Activated CD4-positive, alpha-beta T cell treated with anti-CD3 and anti-CD28 coated beads for 36 hours (primary cell): ENCODE measurements at regions of chr7 and their contacts with region 1.

Region 1: GRCh38 chr7:152025077-152025936 is at the start of gene GALNT11:
- DNase-seq: peak; percentile 93
- ATAC-seq: peak; percentile 96
- H3K4me3 Mint-ChIP-seq: peak within 1 kb of the TSS; percentile 73
- H3K27ac Mint-ChIP-seq: peak within 1 kb of the TSS; percentile 85
- H3K4me1 Mint-ChIP-seq: peaks cover 35% of the 10 kb centered on the region
- H3K27me3 Mint-ChIP-seq: no peaks in the 10 kb centered on the region
- total RNA-seq, gene GALNT11: 22.0 to 24.8 TPM

Region 2: GRCh38 chr7:151341357-151342101 is 683.8 kb before region 1 on chr7 and contains the start of gene NUB1:
- CTCF ChIA-PET with region 1: no interaction called
- POLR2A ChIA-PET with region 1: no interaction called
- intact Hi-C with region 1: loop called in 1 of 2 experiments (anchors 5 kb)
- DNase-seq: peak; percentile 96
- ATAC-seq: peak; percentile 82
- H3K4me3 Mint-ChIP-seq: peak within 1 kb of the TSS; percentile 76
- H3K27ac Mint-ChIP-seq: peak within 1 kb of the TSS; percentile 78
- H3K4me1 Mint-ChIP-seq: peaks cover 46% of the 10 kb centered on the region
- H3K27me3 Mint-ChIP-seq: no peaks in the 10 kb centered on the region
- total RNA-seq, gene NUB1: 51.4 to 70.4 TPM

Region 3: DNA sequence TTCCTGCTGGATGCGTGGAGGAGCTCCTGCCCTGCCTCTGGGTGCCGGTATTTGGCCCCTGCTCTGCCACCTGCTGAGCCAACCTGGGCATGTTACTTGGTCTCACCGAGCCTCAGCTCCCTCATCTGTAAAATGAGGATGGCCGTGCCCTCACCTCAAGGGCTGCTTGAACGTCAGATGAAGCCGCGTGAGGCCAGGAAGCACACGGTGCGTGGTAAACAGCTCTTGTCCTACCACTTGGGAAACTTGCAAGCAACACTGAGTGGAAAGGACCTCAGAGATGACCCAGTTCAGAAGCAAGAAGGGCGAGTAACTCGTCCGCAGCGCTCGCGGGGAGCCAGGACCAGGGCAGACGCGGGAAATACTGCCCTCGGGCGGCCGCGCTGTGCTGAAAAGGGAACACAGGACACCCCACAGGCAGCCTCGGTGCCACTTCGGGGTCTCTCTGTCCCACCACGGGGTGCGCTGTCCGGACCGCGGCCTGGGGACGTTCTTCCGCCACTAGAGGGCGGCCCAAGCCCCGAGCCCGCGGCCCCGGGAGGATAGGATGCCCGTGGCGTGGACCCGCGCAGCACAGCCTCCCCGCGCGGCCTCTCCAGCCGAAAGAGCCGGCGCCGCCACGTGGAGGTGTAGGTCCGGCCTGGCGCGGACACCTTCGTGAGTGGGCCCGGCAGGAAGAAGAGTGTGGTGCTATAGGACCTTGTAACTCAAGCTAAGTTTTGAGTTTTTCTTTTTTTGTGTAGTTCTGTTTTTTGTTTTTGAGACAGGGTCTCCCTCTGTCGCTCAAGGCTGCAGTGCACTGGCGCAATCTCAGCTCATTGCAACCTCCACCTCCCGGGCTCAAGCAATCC is 242.5 kb before region 1 on chr7:
- CTCF ChIA-PET with region 1: interaction called, 3 read pairs
- POLR2A ChIA-PET with region 1: no interaction called
- intact Hi-C with region 1: loop called in 1 of 2 experiments (anchors 1 kb)
- DNase-seq: peak; percentile 84
- ATAC-seq: peak; percentile 91
- H3K4me3 Mint-ChIP-seq: peak overlapping the region; percentile 71
- H3K27ac Mint-ChIP-seq: peak overlapping the region; percentile 86
- H3K4me1 Mint-ChIP-seq: peaks cover 8% of the 10 kb centered on the region
- H3K27me3 Mint-ChIP-seq: no peaks in the 10 kb centered on the region

Region 4: DNA sequence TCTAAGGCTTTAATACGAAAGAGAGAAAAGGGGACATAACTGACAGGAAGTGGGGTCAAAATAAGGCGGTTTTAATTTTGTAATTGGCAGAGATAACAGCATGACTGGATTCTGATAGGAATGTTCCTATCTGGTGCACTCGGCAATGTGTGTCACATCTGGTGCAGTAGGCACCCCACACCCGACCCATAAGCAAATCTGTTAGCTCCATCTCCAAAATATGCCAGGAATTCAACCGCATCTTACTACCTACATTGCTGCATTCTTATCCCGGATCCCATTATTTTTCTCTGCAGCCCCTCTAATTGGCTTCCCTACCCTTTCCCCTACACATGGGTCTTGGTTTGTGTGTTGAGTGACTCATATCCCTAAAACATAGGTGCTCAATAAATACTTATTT is 19.0 kb before region 1 on chr7:
- CTCF ChIA-PET with region 1: no interaction called
- POLR2A ChIA-PET with region 1: no interaction called
- intact Hi-C with region 1: no loop called
- DNase-seq: no peak
- ATAC-seq: no peak
- H3K4me3 Mint-ChIP-seq: no peak overlapping the region
- H3K27ac Mint-ChIP-seq: no peak overlapping the region
- H3K4me1 Mint-ChIP-seq: no peaks in the 10 kb centered on the region
- H3K27me3 Mint-ChIP-seq: peaks cover 7% of the 10 kb centered on the region

Region 5: GRCh38 chr7:152103691-152104090 is 78.4 kb after region 1 on chr7:
- CTCF ChIA-PET with region 1: no interaction called
- POLR2A ChIA-PET with region 1: no interaction called
- intact Hi-C with region 1: no loop called
- DNase-seq: no peak
- ATAC-seq: no peak
- H3K4me3 Mint-ChIP-seq: no peak overlapping the region
- H3K27ac Mint-ChIP-seq: peak overlapping the region; percentile 16
- H3K4me1 Mint-ChIP-seq: no peaks in the 10 kb centered on the region
- H3K27me3 Mint-ChIP-seq: no peaks in the 10 kb centered on the region

Region 6: DNA sequence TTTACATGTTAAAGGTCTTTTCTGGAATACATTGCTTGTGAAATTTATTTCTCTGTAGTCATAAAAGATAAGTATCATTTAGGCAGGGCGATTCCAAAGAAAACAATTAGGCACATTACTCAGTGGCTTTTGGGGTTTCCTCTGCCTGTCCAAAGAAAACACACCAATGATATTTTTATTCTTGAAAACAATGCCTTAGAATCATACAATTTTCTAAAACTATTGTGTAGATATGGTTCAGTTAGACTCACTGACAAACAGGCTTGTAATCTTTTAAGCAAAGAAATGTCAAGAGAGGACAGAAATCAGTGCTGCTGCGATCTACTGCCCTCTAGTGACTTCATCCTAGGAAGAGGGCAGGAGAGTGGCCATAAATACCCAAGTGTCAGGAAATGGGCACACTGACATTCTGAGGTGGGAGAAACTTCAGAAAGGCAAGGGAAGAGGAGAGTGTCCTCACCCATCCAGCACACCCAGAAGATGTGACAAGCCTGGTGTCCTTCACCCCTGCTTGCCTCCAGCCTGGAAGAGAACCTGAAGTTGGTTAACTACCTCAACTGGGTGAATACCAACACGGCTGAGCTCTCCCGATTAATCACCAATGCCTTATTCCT is 120.7 kb after region 1 on chr7:
- CTCF ChIA-PET with region 1: interaction called, 3 read pairs
- POLR2A ChIA-PET with region 1: no interaction called
- intact Hi-C with region 1: loop called in 1 of 2 experiments (anchors 1 kb)
- DNase-seq: peak; percentile 52
- ATAC-seq: peak; percentile 43
- H3K4me3 Mint-ChIP-seq: no peak overlapping the region
- H3K27ac Mint-ChIP-seq: peak overlapping the region; percentile 93
- H3K4me1 Mint-ChIP-seq: peaks cover 48% of the 10 kb centered on the region
- H3K27me3 Mint-ChIP-seq: no peaks in the 10 kb centered on the region

Region 7: DNA sequence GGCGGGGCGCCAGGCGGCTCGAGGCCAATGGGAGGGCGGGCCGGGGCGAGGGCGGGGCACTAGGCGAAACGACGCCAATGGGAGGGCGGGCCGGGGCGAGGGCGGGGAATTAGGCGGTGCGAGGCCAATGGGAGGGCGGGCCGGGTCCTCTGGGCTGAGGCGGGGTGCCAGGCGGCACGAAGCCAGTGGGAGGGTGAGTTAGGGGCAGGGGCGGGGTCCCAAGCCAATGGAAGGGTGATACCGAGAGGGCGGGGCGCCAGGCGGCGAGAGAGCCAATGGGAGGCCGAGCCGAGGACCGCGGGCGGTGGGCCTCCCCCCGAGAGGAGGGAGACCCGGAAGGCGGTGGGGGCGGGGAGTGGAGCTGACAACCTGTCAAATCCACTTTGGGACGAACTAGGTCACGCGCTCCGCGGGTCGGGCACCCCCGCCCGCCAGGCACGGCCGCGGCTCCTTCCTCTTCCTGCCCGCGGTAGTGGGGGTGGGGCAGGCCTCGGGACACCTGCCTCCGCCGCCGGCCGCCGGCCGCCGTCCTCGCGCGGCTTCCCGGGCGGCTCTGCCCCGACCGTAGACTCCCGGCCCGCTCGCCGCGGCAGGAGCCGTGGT is 438.5 kb after region 1 on chr7:
- CTCF ChIA-PET with region 1: no interaction called
- POLR2A ChIA-PET with region 1: interaction called, 3 read pairs
- intact Hi-C with region 1: loop called in 1 of 2 experiments (anchors 1 kb)
- DNase-seq: peak; percentile 100
- ATAC-seq: peak; percentile 95
- H3K4me3 Mint-ChIP-seq: peak overlapping the region; percentile 88
- H3K27ac Mint-ChIP-seq: no peak overlapping the region
- H3K4me1 Mint-ChIP-seq: peaks cover 5% of the 10 kb centered on the region
- H3K27me3 Mint-ChIP-seq: no peaks in the 10 kb centered on the region

Region 8: DNA sequence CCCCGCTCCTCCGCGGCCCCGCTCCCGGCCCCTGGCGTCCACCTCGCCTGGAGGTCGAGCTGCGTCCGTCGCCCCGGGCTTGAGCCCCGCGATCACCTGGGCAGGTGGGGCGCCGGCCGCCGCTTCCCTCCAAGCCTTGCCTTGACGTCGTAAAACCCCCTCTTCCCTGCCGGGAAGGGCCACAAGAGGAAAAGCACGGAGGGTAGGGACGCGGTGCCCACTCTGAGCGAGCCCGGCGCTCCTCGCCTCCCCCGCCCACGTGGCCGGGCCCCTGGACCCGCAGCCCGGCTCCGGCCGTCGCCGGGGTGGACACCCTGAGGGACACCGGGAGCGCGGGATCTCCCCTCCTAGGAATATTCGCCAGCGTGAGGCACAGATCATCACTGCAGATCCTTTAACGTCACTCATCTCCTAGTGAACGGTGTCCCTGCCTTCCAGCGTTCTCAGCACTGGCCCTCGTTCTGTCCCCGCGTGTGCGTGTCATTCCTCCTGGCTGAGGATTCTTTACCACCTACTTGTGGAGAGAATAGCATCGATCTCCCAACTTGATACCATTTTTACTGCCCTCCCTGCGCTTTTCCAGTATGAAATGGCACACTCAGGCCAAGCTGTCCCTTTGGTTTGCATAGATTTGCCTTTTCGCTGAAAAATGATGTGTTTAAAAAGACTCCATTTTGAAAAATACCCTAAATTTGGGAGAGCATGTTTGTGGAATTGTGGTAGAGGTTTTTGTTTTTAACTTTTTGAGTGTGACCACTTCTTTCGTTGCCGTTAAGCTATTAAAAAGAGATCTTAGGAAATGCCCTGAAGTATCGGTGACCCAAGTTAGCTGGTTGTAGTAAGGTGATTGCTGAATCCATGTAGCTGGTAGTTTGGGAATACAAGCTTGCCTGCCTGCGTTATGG is 734.9 kb after region 1 on chr7:
- CTCF ChIA-PET with region 1: no interaction called
- POLR2A ChIA-PET with region 1: no interaction called
- intact Hi-C with region 1: loop called in 1 of 2 experiments (anchors 1 kb)
- DNase-seq: peak; percentile 42
- ATAC-seq: peak; percentile 21
- H3K4me3 Mint-ChIP-seq: peak overlapping the region; percentile 91
- H3K27ac Mint-ChIP-seq: peak overlapping the region; percentile 91
- H3K4me1 Mint-ChIP-seq: peaks cover 20% of the 10 kb centered on the region
- H3K27me3 Mint-ChIP-seq: no peaks in the 10 kb centered on the region